ENCODE measurements at regions of chr12 and their contacts with region 1.

Region 1: DNA sequence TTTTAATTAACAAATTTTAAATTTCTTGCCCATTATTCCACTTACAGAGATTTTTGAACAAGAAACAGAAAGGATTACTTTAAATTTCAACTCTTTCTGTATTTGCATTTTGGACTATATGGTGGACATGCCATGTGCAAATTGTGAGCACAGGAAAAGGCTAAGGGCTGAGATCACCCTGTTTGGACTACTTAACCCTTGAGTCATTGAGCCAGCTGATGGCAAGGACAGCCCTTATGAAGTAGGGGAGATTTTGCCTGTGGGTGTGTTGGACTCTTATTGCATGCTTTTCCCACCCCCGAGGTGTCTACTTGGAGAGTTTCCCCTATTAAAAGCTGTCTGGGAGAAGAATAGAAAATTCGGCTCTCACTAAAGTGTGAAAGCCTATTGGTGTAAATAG is 17.2 kb downstream of the DERA start:
- DNase-seq: no peak

Region 2: GRCh38 chr12:15979096-15980092 is 51.0 kb after region 1 on chr12:
- in situ Hi-C with region 1: loop called (anchors 5 kb)
- DNase-seq: peak; percentile 3

Measured in G401 (cell line).